ENCODE measurements at regions of chr3 and their contacts with region 1.

Region 1: GRCh38 chr3:44198284-44199269 is 43.1 kb upstream of the TOPAZ1 start:
- DNase-seq: peak; percentile 87
- H3K4me3 Mint-ChIP-seq: no peak overlapping the region
- H3K27ac Mint-ChIP-seq: no peak overlapping the region
- H3K4me1 Mint-ChIP-seq: no peaks in the 10 kb centered on the region
- H3K27me3 Mint-ChIP-seq: peaks cover 8% of the 10 kb centered on the region

Region 2: GRCh38 chr3:42961633-42962032 is 1236.9 kb before region 1 on chr3:
- CTCF ChIA-PET with region 1: no interaction called
- intact Hi-C with region 1: loop called (anchors 5 kb)
- DNase-seq: peak; percentile 50
- H3K4me3 Mint-ChIP-seq: no peak overlapping the region
- H3K27ac Mint-ChIP-seq: no peak overlapping the region
- H3K4me1 Mint-ChIP-seq: peaks cover 20% of the 10 kb centered on the region
- H3K27me3 Mint-ChIP-seq: no peaks in the 10 kb centered on the region

Region 3: GRCh38 chr3:43769471-43770425 is 428.8 kb before region 1 on chr3:
- CTCF ChIA-PET with region 1: interaction called, 3 read pairs
- intact Hi-C with region 1: loop called (anchors 1 kb)
- DNase-seq: peak; percentile 88
- H3K4me3 Mint-ChIP-seq: peak overlapping the region; percentile 28
- H3K27ac Mint-ChIP-seq: no peak overlapping the region
- H3K4me1 Mint-ChIP-seq: peaks cover 16% of the 10 kb centered on the region
- H3K27me3 Mint-ChIP-seq: peaks cover 6% of the 10 kb centered on the region

Region 4: DNA sequence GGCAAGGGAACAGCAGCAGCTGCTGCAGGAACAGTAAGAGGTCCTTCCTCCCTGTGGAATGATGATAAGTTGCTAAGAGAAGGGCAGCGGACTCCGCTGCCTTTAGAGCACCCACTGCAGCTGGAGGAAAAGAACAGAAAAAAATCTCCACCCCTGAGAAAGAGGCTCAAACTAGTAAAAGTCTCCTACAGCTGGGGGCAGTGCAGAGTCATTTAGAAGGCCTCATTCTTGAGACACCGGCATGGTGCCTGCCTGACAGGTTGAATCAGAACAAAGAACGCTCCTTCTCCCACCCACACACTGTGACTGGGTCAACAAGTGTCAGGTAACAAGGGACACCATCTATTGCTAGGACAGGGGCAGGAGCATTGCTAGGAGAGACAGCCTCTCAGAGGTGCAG is 319.4 kb before region 1 on chr3:
- CTCF ChIA-PET with region 1: interaction called, 3 read pairs
- intact Hi-C with region 1: loop called (anchors 1 kb)
- DNase-seq: peak; percentile 41
- H3K4me3 Mint-ChIP-seq: no peak overlapping the region
- H3K27ac Mint-ChIP-seq: no peak overlapping the region
- H3K4me1 Mint-ChIP-seq: no peaks in the 10 kb centered on the region
- H3K27me3 Mint-ChIP-seq: no peaks in the 10 kb centered on the region

Region 5: GRCh38 chr3:44136421-44136820 is 62.2 kb before region 1 on chr3:
- CTCF ChIA-PET with region 1: no interaction called
- intact Hi-C with region 1: no loop called
- DNase-seq: peak; percentile 7
- H3K4me3 Mint-ChIP-seq: no peak overlapping the region
- H3K27ac Mint-ChIP-seq: no peak overlapping the region
- H3K4me1 Mint-ChIP-seq: no peaks in the 10 kb centered on the region
- H3K27me3 Mint-ChIP-seq: peaks cover 10% of the 10 kb centered on the region

Region 6: GRCh38 chr3:44186712-44187111 is 11.9 kb before region 1 on chr3:
- CTCF ChIA-PET with region 1: interaction called, 12 read pairs
- intact Hi-C with region 1: no loop called
- DNase-seq: no peak
- H3K4me3 Mint-ChIP-seq: no peak overlapping the region
- H3K27ac Mint-ChIP-seq: no peak overlapping the region
- H3K4me1 Mint-ChIP-seq: peaks cover 5% of the 10 kb centered on the region
- H3K27me3 Mint-ChIP-seq: peaks cover 12% of the 10 kb centered on the region

Measured in activated naive CD4-positive, alpha-beta T cell treated with anti-CD3 and anti-CD28 coated beads for 36 hours (primary cell).